IMR-90 (cell line): ENCODE measurements at regions of chr1 and their contacts with region 1.

Region 1: DNA sequence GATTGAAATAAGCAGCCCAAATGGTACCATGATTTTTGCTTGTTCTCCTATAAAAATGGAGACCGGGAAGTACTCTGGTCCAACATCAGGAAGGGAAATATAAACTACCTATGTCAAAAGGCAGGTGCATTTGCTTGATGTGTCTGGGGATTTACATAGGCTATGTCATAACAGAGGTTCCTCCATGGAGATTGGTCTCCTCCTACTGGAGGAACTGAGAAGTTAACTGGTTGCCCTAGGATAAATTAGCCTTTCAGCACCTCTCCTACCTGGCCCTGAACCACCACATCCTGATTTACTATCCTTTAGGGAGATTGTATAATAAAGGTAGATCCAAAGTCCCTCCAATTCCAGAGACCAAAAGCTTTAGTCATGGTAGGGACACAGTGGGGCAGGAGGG is 1109.3 kb upstream of the B3GALT2 start:
- DNase-seq: peak; percentile 44
- ATAC-seq: peak; percentile 61
- H3K4me3 ChIP-seq: no peak overlapping the region
- H3K27ac ChIP-seq: no peak overlapping the region
- H3K4me1 ChIP-seq: no peaks in the 10 kb centered on the region
- H3K27me3 ChIP-seq: no peaks in the 10 kb centered on the region
- CTCF ChIP-seq: peak; percentile 57
- POLR2A ChIP-seq: no peak
- RAD21 ChIP-seq: peak; percentile 71

Region 2: DNA sequence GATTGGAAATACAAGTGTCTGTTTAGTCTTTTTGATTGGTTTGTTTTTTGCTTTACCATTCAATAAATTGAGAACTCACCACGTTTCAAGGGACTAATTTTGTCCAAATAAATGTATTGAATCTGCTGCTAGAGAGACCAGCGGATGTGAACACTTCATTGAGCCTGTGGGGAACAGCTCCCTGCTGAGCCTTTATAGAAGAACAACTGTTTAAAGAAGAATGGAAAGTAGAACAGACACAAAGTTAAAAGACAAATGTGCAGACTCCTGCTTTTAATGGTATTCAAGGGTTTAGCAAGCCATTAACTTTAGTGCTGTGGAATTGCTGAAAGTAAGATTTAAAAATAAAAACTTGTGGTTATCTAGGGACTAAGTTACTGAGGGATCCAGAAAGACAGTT is 291.5 kb before region 1 on chr1:
- CTCF ChIA-PET with region 1: no interaction called
- POLR2A ChIA-PET with region 1: no interaction called
- dilution Hi-C with region 1: no loop called
- in situ Hi-C with region 1: no loop called
- intact Hi-C with region 1: loop called (anchors 10 kb)
- DNase-seq: no peak
- ATAC-seq: no peak
- H3K4me3 ChIP-seq: no peak overlapping the region
- H3K27ac ChIP-seq: no peak overlapping the region
- H3K4me1 ChIP-seq: no peaks in the 10 kb centered on the region
- H3K27me3 ChIP-seq: no peaks in the 10 kb centered on the region
- CTCF ChIP-seq: no peak
- POLR2A ChIP-seq: no peak
- RAD21 ChIP-seq: no peak

Region 3: GRCh38 chr1:194548071-194548470 is 252.4 kb after region 1 on chr1:
- CTCF ChIA-PET with region 1: no interaction called
- POLR2A ChIA-PET with region 1: no interaction called
- dilution Hi-C with region 1: no loop called
- in situ Hi-C with region 1: no loop called
- intact Hi-C with region 1: no loop called
- DNase-seq: no peak
- ATAC-seq: no peak
- H3K4me3 ChIP-seq: no peak overlapping the region
- H3K27ac ChIP-seq: no peak overlapping the region
- H3K4me1 ChIP-seq: no peaks in the 10 kb centered on the region
- H3K27me3 ChIP-seq: no peaks in the 10 kb centered on the region
- CTCF ChIP-seq: no peak
- POLR2A ChIP-seq: no peak
- RAD21 ChIP-seq: no peak